Activated CD4-positive, alpha-beta T cell treated with anti-CD3 and anti-CD28 coated beads for 36 hours (primary cell): ENCODE measurements at regions of chr12 and their contacts with region 1.

Region 1: GRCh38 chr12:26001530-26001929 is 43.0 kb downstream of the RASSF8 start:
- DNase-seq: no peak
- ATAC-seq: no peak
- H3K4me3 Mint-ChIP-seq: no peak overlapping the region
- H3K27ac Mint-ChIP-seq: no peak overlapping the region
- H3K4me1 Mint-ChIP-seq: no peaks in the 10 kb centered on the region
- H3K27me3 Mint-ChIP-seq: no peaks in the 10 kb centered on the region

Region 2: DNA sequence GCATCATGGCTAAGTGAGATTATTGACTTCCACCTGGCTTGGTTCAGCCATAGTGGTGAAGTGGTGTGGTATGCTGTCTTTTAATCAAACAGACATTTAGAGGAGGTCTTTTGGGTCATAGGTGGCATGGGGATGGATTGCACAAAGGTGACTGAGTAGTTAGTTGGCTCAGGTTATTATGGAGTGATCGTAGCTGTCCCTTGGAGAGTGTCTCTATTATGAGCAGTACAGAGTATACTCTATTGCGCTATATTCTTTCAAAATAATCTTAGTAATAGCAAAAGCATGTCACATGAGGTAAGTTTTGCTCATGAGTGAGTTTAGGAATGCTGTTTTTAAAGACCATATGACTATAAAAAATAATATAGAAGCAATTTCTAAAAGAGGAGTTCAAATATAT is 17.4 kb after region 1 on chr12:
- CTCF ChIA-PET with region 1: no interaction called
- POLR2A ChIA-PET with region 1: no interaction called
- intact Hi-C with region 1: no loop called
- DNase-seq: no peak
- ATAC-seq: no peak
- H3K4me3 Mint-ChIP-seq: no peak overlapping the region
- H3K27ac Mint-ChIP-seq: no peak overlapping the region
- H3K4me1 Mint-ChIP-seq: no peaks in the 10 kb centered on the region
- H3K27me3 Mint-ChIP-seq: peaks cover 2% of the 10 kb centered on the region

Region 3: DNA sequence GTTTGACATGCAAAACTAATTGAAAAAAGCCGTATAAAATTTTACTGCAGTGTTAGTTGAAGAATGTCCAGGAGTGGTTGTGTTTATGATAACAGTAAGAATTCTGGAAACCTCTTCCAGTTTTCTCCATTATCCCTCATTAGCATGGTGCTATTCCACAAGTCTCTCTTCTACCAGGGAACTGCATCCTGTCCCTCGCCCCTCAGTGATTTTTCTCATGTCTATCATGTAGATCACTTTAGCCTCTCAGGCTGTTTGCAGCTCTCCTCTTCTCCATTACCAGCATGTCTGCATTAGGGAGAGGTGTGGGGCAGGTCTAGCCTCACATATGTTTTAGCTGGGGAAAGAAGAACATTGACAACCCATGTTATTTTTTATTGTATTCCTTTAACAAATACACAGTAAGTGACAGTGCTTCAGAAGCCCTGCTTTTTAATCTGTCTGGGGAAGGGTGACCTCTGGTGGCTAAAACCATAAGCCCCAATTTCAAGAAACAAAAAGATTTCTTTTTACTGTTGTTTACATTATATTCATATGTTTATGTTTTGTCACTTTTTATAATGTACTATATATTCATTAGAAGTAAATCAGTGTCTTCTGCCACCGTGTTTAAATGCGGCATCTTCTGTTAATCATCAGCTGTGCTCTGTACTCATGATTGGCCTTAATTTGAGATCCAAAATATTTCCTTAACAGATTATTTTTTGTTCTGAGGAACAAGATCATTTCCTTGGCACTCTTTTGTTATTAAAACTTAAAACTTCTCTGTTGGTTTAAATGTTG is 27.6 kb after region 1 on chr12:
- CTCF ChIA-PET with region 1: interaction called, 4 read pairs
- POLR2A ChIA-PET with region 1: no interaction called
- intact Hi-C with region 1: loop called in 1 of 2 experiments (anchors 2 kb)
- DNase-seq: peak; percentile 44
- ATAC-seq: no peak
- H3K4me3 Mint-ChIP-seq: no peak overlapping the region
- H3K27ac Mint-ChIP-seq: no peak overlapping the region
- H3K4me1 Mint-ChIP-seq: no peaks in the 10 kb centered on the region
- H3K27me3 Mint-ChIP-seq: peaks cover 2% of the 10 kb centered on the region

Region 4: DNA sequence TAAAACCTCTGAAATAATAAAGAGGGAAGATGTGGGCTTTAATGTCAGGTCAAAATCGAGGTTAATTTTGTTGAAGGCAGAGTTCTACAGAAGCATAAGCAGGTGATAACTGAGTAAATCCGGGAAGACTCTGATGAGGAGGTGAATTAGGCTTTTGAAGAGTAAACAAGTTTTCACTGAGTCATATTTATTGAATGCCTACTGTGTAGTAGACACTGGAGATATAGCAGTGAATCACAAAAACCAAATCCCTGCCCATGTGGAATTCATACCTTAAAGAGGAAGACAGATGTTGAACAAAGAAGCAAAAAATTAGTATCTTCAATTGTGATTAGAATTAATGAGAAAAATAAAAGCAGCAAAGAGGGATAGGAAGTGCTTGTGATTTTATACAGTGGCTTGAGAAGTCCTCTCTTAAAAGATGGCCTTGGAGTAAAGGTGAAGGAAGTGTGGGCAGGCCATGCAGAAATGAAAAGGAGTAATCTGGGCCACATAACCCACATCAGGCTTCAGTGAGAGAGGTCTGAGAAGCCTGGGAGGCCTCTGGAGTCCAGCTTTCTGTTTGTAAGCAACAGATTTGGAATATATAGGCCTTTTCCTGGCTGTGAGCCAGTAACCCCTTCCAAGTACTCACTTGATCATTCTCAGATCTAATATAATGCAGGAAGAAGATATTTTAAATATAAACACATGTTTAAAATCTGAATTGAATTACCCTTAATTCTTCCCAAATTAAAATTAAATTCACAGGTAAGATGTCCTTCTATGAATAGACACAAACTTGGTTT is 76.6 kb after region 1 on chr12:
- CTCF ChIA-PET with region 1: no interaction called
- POLR2A ChIA-PET with region 1: no interaction called
- intact Hi-C with region 1: no loop called
- DNase-seq: no peak
- ATAC-seq: no peak
- H3K4me3 Mint-ChIP-seq: no peak overlapping the region
- H3K27ac Mint-ChIP-seq: no peak overlapping the region
- H3K4me1 Mint-ChIP-seq: no peaks in the 10 kb centered on the region
- H3K27me3 Mint-ChIP-seq: peaks cover 2% of the 10 kb centered on the region